ENCODE measurements at regions of chr7 and their contacts with region 1.

Region 1: DNA sequence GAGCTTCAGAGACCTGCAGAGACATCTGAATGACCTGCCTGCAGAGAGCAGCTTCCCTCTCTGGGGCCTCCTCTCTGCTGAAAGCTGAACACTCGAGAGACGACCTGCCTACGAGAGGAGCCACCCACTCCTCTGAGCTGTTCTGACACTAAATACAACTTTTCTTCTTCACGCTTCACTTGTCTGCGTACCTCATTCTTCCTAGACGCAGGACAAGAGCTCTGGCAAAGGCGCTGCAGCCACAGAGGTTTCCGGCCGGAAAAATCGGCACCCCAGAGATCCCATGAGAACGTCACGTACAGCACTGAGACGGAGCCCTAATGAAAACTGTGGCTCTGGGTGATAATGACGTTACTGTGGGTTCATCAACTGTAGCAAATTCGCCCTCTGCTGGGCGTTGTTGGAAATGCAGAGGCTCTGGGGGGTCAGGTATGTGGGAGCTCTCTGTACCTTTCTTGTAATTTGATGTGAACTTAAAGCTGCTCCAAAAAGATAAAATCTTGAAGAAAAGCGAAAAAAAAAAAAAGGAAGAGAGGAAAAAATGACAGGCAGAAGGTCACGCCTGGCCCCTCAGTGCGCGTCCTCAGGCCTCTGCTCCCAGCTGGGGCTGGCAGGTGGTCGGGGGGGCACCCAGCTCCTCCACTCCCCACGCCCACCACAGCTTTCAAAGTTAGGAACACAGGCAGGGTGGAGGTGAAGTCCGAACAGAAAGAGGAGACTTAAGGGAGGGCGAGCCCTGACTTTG is 120.7 kb downstream of the DYNC2I1 start:
- DNase-seq: peak; percentile 76
- ATAC-seq: peak; percentile 72
- H3K4me3 ChIP-seq: peak overlapping the region; percentile 57 to 73 (median 67)
- H3K27ac ChIP-seq: no peak overlapping the region
- H3K4me1 ChIP-seq: peaks cover 24% of the 10 kb centered on the region
- H3K27me3 ChIP-seq: peaks cover 0 to 5% of the 10 kb centered on the region in 2 experiments; a peak in 1 of 5 replicates
- CTCF ChIP-seq: peak; percentile 89
- EP300 ChIP-seq: no peak
- POLR2A ChIP-seq: no peak
- RAD21 ChIP-seq: peak; percentile 66

Region 2: DNA sequence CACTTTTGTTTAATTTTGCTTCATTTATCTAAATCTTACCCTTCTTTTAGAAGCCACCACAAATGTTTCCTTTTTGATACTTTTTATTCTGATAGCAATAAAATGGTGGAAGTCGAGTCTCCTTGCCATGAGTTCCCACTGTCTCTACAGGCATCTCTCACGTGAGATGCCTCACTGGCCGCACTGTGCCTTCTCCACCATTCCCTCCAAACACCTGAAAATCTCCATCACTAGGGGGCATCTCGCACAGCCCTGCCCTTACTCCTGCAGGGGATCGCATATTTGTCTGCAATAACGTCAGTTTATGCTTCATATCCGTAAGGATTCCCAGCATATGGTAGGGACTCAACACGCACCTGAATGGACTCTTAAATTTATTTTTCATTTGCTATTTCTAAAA is 216.1 kb before region 1 on chr7:
- CTCF ChIA-PET with region 1: no interaction called
- POLR2A ChIA-PET with region 1: no interaction called
- in situ Hi-C with region 1: no loop called
- intact Hi-C with region 1: loop called (anchors 2 kb)
- DNase-seq: peak; percentile 15
- ATAC-seq: peak; percentile 71
- H3K4me3 ChIP-seq: no peak overlapping the region
- H3K27ac ChIP-seq: no peak overlapping the region
- H3K4me1 ChIP-seq: no peaks in the 10 kb centered on the region
- H3K27me3 ChIP-seq: no peaks in the 10 kb centered on the region
- CTCF ChIP-seq: peak; percentile 46
- EP300 ChIP-seq: no peak
- POLR2A ChIP-seq: no peak
- RAD21 ChIP-seq: no peak

Region 3: DNA sequence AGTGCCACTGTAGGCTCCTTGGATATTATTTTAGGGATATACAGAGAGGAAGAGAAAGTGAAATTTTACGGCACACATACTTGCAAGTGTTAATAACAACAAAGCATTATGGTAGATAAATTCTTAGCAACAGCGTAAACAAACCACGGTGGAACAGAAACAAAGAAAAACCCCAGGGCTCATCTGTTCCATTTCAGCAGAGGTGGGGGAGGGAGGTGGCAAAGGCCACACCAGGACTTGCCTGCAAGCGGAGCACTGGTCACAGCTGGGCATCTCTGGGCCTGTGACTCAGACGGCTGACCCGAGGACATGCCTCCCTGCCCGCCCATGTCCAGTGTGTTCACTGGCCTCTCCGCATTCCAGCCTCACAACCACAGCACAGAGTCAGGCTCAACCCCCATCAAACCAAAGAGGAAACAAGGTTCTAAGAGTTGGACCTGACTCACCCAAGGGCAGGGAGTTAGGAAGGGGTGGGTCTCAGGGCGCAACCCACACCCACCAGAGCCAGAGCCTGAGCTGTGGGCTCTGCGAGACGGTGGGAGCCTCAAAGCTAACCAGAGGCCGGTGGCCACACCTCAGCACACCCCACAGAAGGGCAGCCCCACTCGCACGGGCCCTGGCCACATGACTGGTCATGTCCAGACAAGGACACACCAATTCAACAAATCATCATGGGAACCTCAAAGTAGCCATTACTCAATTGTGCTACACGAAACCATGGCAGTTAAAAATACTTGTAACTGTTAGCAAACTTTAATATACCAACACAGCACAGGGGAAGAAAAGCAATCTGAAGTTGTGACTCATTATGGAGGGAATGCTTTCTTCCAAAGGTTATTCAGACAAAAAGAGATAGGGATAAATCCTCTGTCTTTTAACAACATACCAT is 158.5 kb before region 1 on chr7:
- CTCF ChIA-PET with region 1: no interaction called
- POLR2A ChIA-PET with region 1: no interaction called
- in situ Hi-C with region 1: no loop called
- intact Hi-C with region 1: loop called (anchors 5 kb)
- DNase-seq: peak; percentile 91
- ATAC-seq: peak; percentile 98
- H3K4me3 ChIP-seq: peak overlapping the region; percentile 50 to 66 (median 55)
- H3K27ac ChIP-seq: peak overlapping the region; percentile 96
- H3K4me1 ChIP-seq: peaks cover 76% of the 10 kb centered on the region
- H3K27me3 ChIP-seq: no peaks in the 10 kb centered on the region
- CTCF ChIP-seq: peak; percentile 66
- EP300 ChIP-seq: peak in 1 of 2 experiments; percentile 46; a peak in 3 of 4 replicates
- POLR2A ChIP-seq: peak; percentile 38 to 79; a peak in 3 of 4 replicates
- RAD21 ChIP-seq: peak; percentile 83

Region 4: GRCh38 chr7:158885624-158886023 is 91.4 kb before region 1 on chr7:
- CTCF ChIA-PET with region 1: interaction called, 22 read pairs
- POLR2A ChIA-PET with region 1: no interaction called
- in situ Hi-C with region 1: loop called (anchors 5 kb)
- intact Hi-C with region 1: no loop called
- DNase-seq: peak; percentile 12
- ATAC-seq: no peak
- H3K4me3 ChIP-seq: no peak overlapping the region
- H3K27ac ChIP-seq: no peak overlapping the region
- H3K4me1 ChIP-seq: no peaks in the 10 kb centered on the region
- H3K27me3 ChIP-seq: no peaks in the 10 kb centered on the region
- CTCF ChIP-seq: peak; percentile 53
- EP300 ChIP-seq: no peak
- POLR2A ChIP-seq: no peak
- RAD21 ChIP-seq: 0 out of 2 replicates have a peak, but pooled peaks have one; percentile 11

Measured in HepG2 (cell line).